Heart right ventricle (tissue), 16 donors: ENCODE measurements at regions of chr2 and their contacts with region 1.

Region 1: DNA sequence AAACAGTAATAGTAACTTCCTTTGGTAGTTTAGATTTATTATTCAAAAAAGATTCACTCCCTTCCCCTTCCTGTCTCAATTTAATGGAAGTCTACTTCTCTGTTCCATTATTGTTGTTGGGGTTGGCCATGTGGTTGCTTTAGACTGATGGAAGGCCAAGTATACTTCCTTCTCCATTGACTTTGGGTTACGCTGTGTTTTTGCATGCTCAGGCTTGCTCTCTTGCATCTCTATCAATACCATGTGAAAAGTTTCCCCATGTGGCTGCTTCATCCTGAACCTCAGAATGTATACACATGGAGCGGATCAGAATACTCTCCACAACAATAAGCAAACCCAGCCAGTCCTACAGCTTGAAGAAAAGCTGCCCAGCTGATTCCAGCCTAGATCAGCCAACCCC is 20.3 kb downstream of the CFAP210 start:
- DNase-seq: no peak
- ATAC-seq: no peak
- H3K4me3 ChIP-seq: no peak overlapping the region
- H3K27ac ChIP-seq: no peak overlapping the region
- H3K4me1 ChIP-seq: no peaks in the 10 kb centered on the region
- H3K27me3 ChIP-seq: no peaks in the 10 kb centered on the region
- CTCF ChIP-seq: no peak

Region 2: GRCh38 chr2:169247211-169247610 is 426.7 kb before region 1 on chr2:
- intact Hi-C with region 1: no loop called
- DNase-seq: no peak
- ATAC-seq: no peak
- H3K4me3 ChIP-seq: no peak overlapping the region
- H3K27ac ChIP-seq: no peak overlapping the region
- H3K4me1 ChIP-seq: no peaks in the 10 kb centered on the region
- H3K27me3 ChIP-seq: peaks cover 0 to 8% (median 0%) of the 10 kb centered on the region in 7 donors
- CTCF ChIP-seq: no peak

Region 3: DNA sequence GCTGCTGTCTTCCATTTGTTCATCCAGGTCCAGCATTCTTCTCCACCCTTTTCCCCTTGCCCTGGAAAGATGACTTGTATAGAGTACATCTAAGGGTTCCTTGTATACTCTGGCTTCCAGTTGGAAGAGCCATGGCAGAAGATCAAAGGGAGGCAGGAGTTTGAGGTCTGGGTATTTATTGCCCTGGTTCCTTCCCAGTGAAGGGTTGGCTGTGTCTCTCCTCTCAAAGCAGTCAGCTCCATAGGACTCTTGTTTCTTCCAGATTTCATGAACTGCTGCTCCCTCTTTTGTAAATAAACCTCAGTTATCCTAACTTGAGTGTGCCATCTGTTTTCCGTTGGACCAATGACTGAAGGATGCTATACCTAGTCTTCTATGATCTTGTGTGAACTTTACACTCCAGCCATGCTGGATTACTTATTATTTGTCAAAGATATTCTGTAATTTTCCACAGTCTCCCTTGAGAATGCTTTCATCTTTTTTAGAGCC is 188.2 kb before region 1 on chr2:
- intact Hi-C with region 1: no loop called
- DNase-seq: no peak
- ATAC-seq: no peak
- H3K4me3 ChIP-seq: no peak overlapping the region
- H3K27ac ChIP-seq: no peak overlapping the region
- H3K4me1 ChIP-seq: no peaks in the 10 kb centered on the region
- H3K27me3 ChIP-seq: no peaks in the 10 kb centered on the region
- CTCF ChIP-seq: no peak

Region 4: GRCh38 chr2:169659320-169659719 is 14.6 kb before region 1 on chr2:
- intact Hi-C with region 1: loop called in 1 of 10 experiments (anchors 1 kb)
- DNase-seq: no peak
- ATAC-seq: no peak
- H3K4me3 ChIP-seq: no peak overlapping the region
- H3K27ac ChIP-seq: no peak overlapping the region
- H3K4me1 ChIP-seq: no peaks in the 10 kb centered on the region
- H3K27me3 ChIP-seq: peaks cover 0 to 4% (median 0%) of the 10 kb centered on the region in 7 donors
- CTCF ChIP-seq: no peak